IMR-90 (cell line): ENCODE measurements at regions of chrX and their contacts with region 1.

Region 1: GRCh38 chrX:19544693-19545305 is 29.5 kb upstream of the MAP3K15 start:
- DNase-seq: peak; percentile 70
- ATAC-seq: peak; percentile 90
- H3K4me3 ChIP-seq: no peak overlapping the region
- H3K27ac ChIP-seq: no peak overlapping the region
- H3K4me1 ChIP-seq: no peaks in the 10 kb centered on the region
- H3K27me3 ChIP-seq: no peaks in the 10 kb centered on the region; the same call in 1 of the 2 replicates
- CTCF ChIP-seq: peak; percentile 81
- POLR2A ChIP-seq: no peak
- RAD21 ChIP-seq: peak; percentile 78

Region 2: DNA sequence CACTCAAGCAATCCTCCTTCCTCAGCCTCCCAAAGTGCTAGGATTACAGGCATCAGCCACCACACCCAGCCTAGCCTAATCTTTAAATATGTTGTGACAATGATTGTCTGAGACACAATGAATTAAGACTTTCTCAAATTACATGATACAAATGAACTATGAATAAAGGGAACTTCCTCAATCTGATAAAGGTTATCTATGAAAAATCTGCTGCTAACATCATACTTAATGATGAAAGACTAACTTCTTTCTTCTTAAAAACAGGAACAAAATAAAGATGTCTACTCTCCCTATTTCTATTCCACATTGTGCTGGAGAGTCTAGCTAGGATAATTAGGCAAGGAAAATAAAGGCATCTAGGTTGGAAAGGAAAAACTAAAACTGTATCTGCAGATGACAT is 141.1 kb before region 1 on chrX:
- CTCF ChIA-PET with region 1: no interaction called
- POLR2A ChIA-PET with region 1: no interaction called
- dilution Hi-C with region 1: no loop called
- in situ Hi-C with region 1: no loop called
- intact Hi-C with region 1: no loop called
- DNase-seq: no peak
- ATAC-seq: no peak
- H3K4me3 ChIP-seq: no peak overlapping the region
- H3K27ac ChIP-seq: no peak overlapping the region
- H3K4me1 ChIP-seq: no peaks in the 10 kb centered on the region
- H3K27me3 ChIP-seq: no peaks in the 10 kb centered on the region
- CTCF ChIP-seq: no peak
- POLR2A ChIP-seq: no peak
- RAD21 ChIP-seq: no peak

Region 3: DNA sequence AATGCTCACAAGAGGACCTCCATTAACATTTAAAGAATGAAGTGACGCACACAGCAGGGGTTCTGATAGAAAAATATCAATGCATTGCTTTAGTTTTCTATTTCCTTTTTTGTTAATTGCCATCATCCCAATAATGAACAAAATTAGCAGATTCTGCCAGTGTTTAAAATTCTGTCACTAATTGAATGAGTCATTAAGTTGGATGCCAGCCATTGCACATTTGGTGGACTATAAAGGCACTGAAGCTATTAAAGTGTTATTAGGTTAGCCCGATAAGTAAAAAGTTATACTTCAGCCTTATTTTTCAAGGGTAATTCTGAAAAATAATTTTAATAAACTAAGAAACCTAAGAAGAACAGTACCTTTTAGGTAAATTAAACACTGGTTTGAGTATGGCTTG is 82.6 kb before region 1 on chrX:
- CTCF ChIA-PET with region 1: no interaction called
- POLR2A ChIA-PET with region 1: no interaction called
- dilution Hi-C with region 1: no loop called
- in situ Hi-C with region 1: no loop called
- intact Hi-C with region 1: no loop called
- DNase-seq: no peak
- ATAC-seq: no peak
- H3K4me3 ChIP-seq: no peak overlapping the region
- H3K27ac ChIP-seq: no peak overlapping the region
- H3K4me1 ChIP-seq: no peaks in the 10 kb centered on the region
- H3K27me3 ChIP-seq: no peaks in the 10 kb centered on the region
- CTCF ChIP-seq: no peak
- POLR2A ChIP-seq: no peak
- RAD21 ChIP-seq: no peak

Region 4: DNA sequence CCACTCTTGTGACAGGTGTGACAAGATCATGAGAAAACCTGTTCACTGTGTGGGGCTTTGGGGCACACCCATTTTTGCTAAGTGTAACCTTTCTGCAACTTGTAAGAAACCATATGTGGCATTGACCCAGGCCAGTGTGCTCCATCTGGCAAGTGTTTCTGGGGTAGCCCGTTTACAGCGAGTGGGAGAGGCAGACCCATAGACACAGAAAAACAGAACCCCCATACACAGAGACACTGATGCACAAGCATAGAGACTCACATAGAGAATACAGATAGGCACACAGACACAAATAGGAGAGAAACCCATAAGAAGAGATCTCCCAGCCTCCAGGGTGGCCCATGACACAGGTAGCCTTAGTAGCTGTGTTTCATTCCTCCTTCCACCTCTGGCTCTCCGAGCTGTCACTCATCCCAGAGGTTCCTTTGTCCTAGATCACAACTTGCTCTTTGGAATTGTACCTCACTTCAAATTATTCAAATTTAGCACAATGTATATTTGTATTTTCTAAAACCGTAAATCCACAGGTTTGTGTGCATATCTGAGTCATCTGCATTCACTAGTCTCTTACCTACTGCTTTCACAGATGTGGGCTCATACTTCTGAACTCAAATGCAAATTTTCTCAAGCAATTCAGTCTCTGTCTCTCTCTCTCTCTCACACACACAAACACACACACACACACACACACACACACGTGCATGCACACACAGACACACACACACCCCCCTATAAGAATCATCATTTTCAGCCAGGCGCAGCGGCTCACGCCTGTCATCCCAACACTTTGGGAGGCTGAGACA is 228.2 kb after region 1 on chrX:
- CTCF ChIA-PET with region 1: no interaction called
- POLR2A ChIA-PET with region 1: no interaction called
- dilution Hi-C with region 1: no loop called
- in situ Hi-C with region 1: no loop called
- intact Hi-C with region 1: no loop called
- DNase-seq: no peak
- ATAC-seq: no peak
- H3K4me3 ChIP-seq: no peak overlapping the region
- H3K27ac ChIP-seq: no peak overlapping the region
- H3K4me1 ChIP-seq: peaks cover 5% of the 10 kb centered on the region
- H3K27me3 ChIP-seq: no peaks in the 10 kb centered on the region
- CTCF ChIP-seq: no peak
- POLR2A ChIP-seq: no peak
- RAD21 ChIP-seq: no peak

Region 5: DNA sequence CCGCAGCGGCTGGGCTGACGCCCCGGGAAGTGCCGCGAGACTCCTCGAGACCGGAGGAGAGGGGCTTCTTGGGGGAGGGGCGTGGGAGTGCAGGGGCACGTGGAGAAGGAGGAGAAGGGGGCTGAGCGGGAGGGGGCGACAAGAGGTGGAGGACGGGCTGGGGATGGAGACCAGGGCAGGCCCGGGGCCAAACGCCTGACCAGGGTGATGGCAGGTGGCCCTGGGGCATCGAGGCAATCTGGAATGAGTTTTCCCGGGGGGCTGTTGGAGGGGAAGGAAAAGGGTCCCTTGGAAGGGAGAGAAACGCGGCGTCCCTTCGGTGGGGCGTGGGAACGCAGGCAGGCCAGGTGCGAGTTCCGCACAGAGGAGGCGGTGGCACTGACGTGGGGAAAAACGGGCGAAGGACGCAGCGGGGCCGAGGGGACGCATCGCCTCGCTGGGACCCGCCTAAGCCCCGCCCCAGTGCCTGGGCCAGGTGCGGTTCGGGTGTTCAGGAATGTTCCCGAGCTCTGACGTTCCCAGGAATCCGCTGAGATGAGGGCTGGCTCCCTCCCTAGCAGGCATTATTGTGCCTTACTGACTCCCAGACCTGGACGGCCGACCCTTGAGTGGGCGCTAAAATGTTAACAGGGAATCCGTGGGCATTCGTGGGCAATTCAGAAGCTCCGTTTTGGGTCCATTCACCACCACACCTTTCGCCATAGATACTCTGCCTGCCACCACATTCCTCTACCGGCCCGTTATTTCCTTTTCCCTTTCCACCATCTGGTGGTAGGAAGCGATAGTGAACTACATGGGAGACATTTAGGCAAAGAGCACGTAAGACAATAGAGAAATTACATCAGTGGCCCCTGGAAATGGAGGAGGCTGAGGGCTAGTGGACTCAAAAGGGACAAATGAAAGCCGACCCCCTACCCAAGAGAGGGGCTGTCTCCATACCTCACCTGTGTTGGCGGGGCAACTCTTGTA is 343.4 kb after region 1 on chrX:
- CTCF ChIA-PET with region 1: no interaction called
- POLR2A ChIA-PET with region 1: no interaction called
- dilution Hi-C with region 1: no loop called
- in situ Hi-C with region 1: loop called (anchors 10 kb)
- intact Hi-C with region 1: loop called (anchors 1 kb)
- DNase-seq: peak; percentile 77
- ATAC-seq: peak; percentile 60
- H3K4me3 ChIP-seq: peak overlapping the region; percentile 56
- H3K27ac ChIP-seq: peak overlapping the region; percentile 46
- H3K4me1 ChIP-seq: 0 out of 2 replicates have a peak, but pooled peaks cover 2% of the 10 kb centered on the region
- H3K27me3 ChIP-seq: no peaks in the 10 kb centered on the region
- CTCF ChIP-seq: peak; percentile 70
- POLR2A ChIP-seq: no peak
- RAD21 ChIP-seq: peak; percentile 76

Region 6: DNA sequence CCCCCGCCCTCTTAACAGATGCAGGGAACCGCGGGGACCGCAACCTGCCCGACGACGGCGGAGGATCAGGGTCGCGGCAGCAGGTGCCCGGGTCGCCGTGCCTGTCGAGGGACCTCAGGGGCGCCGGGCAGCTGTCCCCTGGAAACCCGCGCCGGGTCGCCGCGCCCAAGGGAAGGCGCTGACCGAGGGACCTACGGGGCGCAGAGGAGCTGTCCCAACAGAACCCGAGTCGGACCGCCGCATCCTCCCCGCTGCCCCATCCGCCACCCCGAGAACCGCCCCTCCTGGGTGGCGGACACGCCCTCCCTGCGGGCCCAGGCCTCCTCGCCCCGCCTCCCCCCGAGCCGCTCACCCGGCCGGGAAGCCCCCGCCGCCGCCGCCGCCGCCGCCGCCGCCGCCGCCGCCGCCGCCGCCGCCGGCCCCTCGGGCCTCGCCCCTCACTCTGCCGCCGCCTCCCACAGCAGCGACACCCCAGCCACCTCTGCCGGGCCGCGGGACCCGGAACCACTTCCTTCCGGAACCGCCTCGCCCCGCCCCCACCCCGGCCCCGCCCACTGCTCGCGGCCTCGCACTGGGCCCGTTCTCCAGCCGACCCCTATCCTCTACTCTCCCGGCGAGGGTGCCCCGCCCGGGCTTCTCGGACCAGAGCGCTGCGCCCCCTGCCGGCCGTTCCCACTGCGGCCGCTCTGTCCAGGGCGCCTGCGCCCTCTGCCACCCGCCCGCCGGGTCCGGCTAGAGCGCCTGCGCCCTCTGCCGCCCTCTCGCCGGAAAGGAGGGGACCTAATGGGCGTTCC is 446.0 kb after region 1 on chrX and contains the start of gene BCLAF3:
- CTCF ChIA-PET with region 1: no interaction called
- POLR2A ChIA-PET with region 1: no interaction called
- dilution Hi-C with region 1: no loop called
- in situ Hi-C with region 1: no loop called
- intact Hi-C with region 1: loop called (anchors 10 kb)
- DNase-seq: peak; percentile 79
- ATAC-seq: peak; percentile 97
- H3K4me3 ChIP-seq: peak within 1 kb of the TSS; percentile 83
- H3K27ac ChIP-seq: peak within 1 kb of the TSS; percentile 56
- H3K4me1 ChIP-seq: no peaks in the 10 kb centered on the region; the same call in 1 of the 2 replicates
- H3K27me3 ChIP-seq: no peaks in the 10 kb centered on the region; the same call in 1 of the 2 replicates
- CTCF ChIP-seq: peak; percentile 86
- POLR2A ChIP-seq: no peak
- RAD21 ChIP-seq: peak; percentile 53
- total RNA-seq, gene BCLAF3: 1.6 and 2.8 TPM in 2 replicates

Region 7: DNA sequence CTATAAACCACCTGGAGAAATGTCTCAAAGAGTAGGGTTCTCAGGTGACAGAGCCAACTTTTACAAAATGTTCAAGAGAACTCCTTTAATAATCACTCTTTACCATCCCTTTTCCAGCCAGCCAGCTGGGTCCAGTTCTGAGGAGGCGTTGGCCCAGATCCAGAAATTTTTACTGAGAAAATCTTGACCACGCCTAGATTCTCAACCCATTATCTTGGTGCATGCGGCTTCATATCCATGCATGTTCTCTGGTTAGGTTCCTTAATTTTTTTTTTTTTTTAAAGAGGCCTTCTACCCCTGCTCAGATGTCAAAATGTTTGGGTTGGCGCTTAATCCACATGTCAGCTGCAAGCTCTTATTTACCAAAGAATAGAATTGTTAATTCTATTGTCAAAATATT is 583.9 kb after region 1 on chrX:
- CTCF ChIA-PET with region 1: no interaction called
- POLR2A ChIA-PET with region 1: no interaction called
- dilution Hi-C with region 1: no loop called
- in situ Hi-C with region 1: no loop called
- intact Hi-C with region 1: loop called (anchors 10 kb)
- DNase-seq: no peak
- ATAC-seq: no peak
- H3K4me3 ChIP-seq: no peak overlapping the region
- H3K27ac ChIP-seq: no peak overlapping the region
- H3K4me1 ChIP-seq: no peaks in the 10 kb centered on the region
- H3K27me3 ChIP-seq: no peaks in the 10 kb centered on the region
- CTCF ChIP-seq: no peak
- POLR2A ChIP-seq: no peak
- RAD21 ChIP-seq: no peak